Activated T-helper 2 cell treated with anti-CD3 and anti-CD28 coated beads, Interferon-gamma antibody, Interleukin-2, Interleukin-4, amounts not matched to agents 10 μg/mL and 5 μg/mL and 100 μg/mL, durations not matched to agents 14 hours and 24 hours and 36 hours (primary cell): ENCODE measurements at regions of chr1 and their contacts with region 1.

Region 1: DNA sequence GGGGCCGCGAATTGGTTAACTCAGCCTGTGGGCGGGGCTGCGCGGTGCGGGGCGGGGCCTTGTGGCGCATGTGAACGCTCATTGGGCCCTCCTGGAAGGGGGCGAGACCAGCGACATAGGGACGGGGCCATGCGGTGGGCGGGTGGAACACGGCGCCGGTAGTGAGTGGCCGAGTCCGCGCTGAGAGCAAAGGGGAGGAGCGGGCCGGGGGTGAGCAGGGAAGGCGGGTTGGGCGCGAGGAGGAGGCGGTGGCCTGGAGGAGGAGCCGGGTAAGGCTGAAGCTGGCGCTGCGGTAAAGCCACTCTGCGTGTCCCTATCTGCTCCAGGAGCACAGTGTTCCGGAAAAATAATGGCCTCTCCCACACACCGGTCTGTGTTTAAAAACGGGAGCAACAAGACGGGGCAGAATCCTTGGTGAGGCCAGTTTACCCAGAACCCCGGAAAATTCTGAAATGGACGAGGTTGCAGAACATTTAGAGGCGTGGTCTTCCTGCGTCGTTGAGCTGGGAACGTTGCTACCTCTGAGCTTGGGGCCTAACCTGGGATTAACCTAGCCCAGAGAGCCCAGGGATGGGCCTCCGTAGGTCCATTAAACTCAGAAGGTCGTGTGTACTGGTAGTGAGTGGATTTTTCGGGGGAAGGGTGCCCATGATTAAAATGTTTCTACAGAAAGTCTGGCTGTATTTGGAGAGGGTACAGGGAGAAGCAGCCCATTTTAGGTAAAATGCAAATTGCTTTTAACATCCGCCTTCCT is 533 bp upstream of the CTNNBIP1 start:
- DNase-seq: peak; percentile 100
- H3K4me3 Mint-ChIP-seq: peak overlapping the region; percentile 89
- H3K27ac Mint-ChIP-seq: peak overlapping the region; percentile 98
- H3K4me1 Mint-ChIP-seq: peaks cover 27% of the 10 kb centered on the region
- H3K27me3 Mint-ChIP-seq: peaks cover 4% of the 10 kb centered on the region

Region 2: DNA sequence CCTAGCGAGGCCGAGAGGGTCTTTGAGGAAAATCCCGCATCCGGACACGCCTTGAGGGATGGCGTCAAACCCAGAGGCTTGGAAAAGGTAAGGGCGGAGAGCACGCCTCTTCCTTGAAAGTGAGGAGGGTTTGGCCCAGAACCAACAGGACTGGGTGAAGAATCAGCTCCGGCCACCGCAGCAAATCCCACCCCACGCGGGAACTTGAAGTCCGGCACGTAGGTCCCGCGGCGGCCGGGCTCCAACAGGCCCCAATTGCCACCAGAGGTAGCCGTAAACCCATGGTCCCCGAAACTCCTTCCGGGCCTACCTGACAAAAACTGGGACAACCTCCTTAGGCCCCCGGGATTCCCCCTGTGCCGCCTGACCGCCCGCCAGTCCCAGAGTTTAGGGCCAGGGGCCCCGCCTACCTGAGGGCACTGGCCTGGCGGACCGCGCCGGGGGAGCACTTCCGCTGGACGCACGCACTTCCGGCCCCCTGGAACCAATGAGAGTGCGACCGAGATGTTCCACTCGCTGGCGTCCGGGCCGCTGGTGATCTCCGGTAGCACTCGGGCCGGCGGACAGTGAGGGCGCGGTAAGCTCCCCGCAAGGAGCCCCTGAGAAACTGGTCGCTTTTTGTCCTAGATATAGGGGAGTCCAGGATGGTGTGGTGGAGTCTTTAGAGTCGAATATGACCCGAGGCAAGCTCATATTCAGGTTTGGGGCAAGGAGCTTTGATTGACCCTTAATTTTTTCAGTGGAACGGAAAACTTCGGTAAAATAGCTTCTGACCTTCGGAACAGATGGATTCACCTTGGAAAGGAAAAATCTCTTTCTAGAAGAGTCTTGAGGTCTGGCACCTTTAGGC is 32.6 kb after region 1 on chr1 and contains the starts of genes LZIC and NMNAT1:
- intact Hi-C with region 1: loop called (anchors 2 kb)
- DNase-seq: peak; percentile 88
- H3K4me3 Mint-ChIP-seq: peak within 1 kb of the TSS; percentile 99
- H3K27ac Mint-ChIP-seq: peak within 1 kb of the TSS; percentile 98
- H3K4me1 Mint-ChIP-seq: peaks cover 13% of the 10 kb centered on the region
- H3K27me3 Mint-ChIP-seq: no peaks in the 10 kb centered on the region
- total RNA-seq, gene LZIC: 30.0 and 31.1 TPM in 2 replicates
- total RNA-seq, gene NMNAT1: 6.8 TPM in 2 replicates

Region 3: DNA sequence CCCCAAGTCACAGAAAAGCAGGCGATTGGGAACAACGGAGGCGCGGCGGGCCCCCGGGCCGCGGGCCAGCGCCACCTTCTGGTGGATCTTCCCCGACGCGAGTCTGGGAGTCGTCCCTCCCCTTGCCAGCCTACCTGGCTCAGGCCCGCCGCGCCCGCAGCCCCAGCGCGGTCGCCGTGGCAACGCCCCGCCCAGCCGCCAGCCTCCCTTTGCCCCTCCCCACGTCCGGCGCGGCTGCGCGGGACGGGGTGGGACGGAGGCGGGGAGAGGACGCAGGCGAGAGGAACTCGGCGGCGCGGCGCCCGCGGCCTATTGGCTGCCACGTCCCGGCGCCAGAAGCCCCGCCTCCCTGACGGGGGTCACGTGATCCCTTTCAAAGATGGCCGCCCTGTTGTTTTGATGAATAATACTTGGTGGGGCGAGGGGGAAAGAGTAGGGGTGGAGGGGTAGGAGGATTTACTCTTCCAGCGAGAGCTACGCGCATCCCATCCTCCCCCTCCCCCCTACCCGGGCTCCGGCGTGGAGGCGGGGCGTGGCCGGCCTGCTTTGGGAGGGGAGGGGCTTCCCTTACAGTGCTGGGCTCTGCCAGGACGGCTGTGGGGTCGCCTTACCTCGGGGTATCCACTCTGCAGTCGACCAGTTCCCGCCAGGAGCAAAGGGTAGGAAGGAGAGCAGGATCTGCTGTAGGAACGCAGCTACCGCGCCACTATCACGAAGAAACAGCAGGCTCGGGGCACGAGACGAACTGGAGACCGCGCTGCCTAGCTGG is 122.2 kb after region 1 on chr1 and contains the start of gene UBE4B:
- intact Hi-C with region 1: loop called (anchors 1 kb)
- DNase-seq: peak; percentile 99
- H3K4me3 Mint-ChIP-seq: peak within 1 kb of the TSS; percentile 96
- H3K27ac Mint-ChIP-seq: peak within 1 kb of the TSS; percentile 93
- H3K4me1 Mint-ChIP-seq: peaks cover 16% of the 10 kb centered on the region
- H3K27me3 Mint-ChIP-seq: no peaks in the 10 kb centered on the region
- total RNA-seq, gene UBE4B: 37.2 and 37.7 TPM in 2 replicates

Region 4: GRCh38 chr1:10152709-10153284 is 242.2 kb after region 1 on chr1:
- intact Hi-C with region 1: no loop called
- DNase-seq: no peak
- H3K4me3 Mint-ChIP-seq: no peak overlapping the region
- H3K27ac Mint-ChIP-seq: no peak overlapping the region
- H3K4me1 Mint-ChIP-seq: no peaks in the 10 kb centered on the region
- H3K27me3 Mint-ChIP-seq: no peaks in the 10 kb centered on the region